CD4-positive, alpha-beta T cell (primary cell): ENCODE measurements at regions of chr20 and their contacts with region 1.

Region 1: DNA sequence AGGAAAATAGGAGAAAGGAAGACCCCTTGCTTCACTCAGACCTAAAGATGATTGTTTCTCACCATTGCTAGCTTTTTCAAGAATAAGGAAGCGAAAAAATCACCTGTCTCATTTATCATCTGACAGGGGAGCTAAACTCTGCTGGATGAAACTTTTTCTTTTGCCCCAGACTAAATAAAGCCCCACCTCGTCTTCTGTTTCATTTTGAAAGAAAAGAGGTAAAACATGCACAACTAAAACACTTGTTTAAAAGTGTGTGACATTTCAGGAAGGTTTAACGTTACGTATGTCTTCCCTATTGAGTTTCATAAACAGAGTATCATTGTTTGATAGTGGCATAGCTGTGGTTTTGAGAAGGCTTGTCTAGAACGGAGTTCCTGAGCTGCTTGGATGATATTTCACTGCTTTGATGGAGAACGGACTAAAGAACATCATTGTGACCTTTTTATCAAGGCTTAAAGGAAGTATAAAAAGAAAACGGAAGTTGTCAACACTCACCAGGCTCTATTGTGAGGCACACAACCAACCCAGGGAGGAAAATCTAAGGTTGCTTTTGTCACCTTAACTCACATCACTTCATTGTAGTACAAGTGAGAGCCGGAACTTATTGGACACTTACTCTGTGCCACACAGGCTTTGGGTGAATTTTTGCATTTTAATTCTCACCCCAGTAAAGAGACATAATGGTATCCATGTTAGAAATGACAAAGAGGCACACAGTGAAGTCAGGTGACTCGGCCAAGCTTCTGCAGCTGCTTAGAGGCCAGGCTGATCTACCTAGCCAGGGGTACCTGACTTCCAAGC is 29.5 kb downstream of the TSHZ2 start:
- DNase-seq: peak in 8 of 14 experiments; percentile 2 to 66 (median 22)
- ATAC-seq: peak; percentile 76
- H3K4me3 ChIP-seq: peak overlapping the region; percentile 44
- H3K4me3 Mint-ChIP-seq: peak overlapping the region; percentile 84
- H3K27ac ChIP-seq: peak overlapping the region; percentile 68 to 79
- H3K27ac Mint-ChIP-seq: peak overlapping the region; percentile 89
- H3K4me1 ChIP-seq: peaks cover 25% of the 10 kb centered on the region
- H3K4me1 Mint-ChIP-seq: peaks cover 72% of the 10 kb centered on the region
- H3K27me3 ChIP-seq: no peaks in the 10 kb centered on the region
- H3K27me3 Mint-ChIP-seq: no peaks in the 10 kb centered on the region
- CTCF ChIP-seq: no peak

Region 2: GRCh38 chr20:52972190-52972937 is 29.3 kb before region 1 on chr20 and contains the start of gene TSHZ2:
- CTCF ChIA-PET with region 1: no interaction called
- POLR2A ChIA-PET with region 1: interaction called, 120 read pairs
- intact Hi-C with region 1: loop called in 1 of 2 experiments (anchors 1 kb)
- DNase-seq: peak; percentile 39 to 76 (median 56)
- ATAC-seq: peak; percentile 50
- H3K4me3 ChIP-seq: peak within 1 kb of the TSS; percentile 77
- H3K4me3 Mint-ChIP-seq: peak within 1 kb of the TSS; percentile 95
- H3K27ac ChIP-seq: peak within 1 kb of the TSS; percentile 81 to 85
- H3K27ac Mint-ChIP-seq: peak within 1 kb of the TSS; percentile 89
- H3K4me1 ChIP-seq: peaks cover 5% of the 10 kb centered on the region
- H3K4me1 Mint-ChIP-seq: peaks cover 48% of the 10 kb centered on the region
- H3K27me3 ChIP-seq: peaks cover 0 to 8% of the 10 kb centered on the region in 2 experiments
- H3K27me3 Mint-ChIP-seq: peaks cover 6% of the 10 kb centered on the region
- CTCF ChIP-seq: no peak
- total RNA-seq, gene TSHZ2: 26.1 to 27.4 TPM

Region 3: GRCh38 chr20:52983726-52984450 is 17.8 kb before region 1 on chr20:
- CTCF ChIA-PET with region 1: interaction called, 3 read pairs
- POLR2A ChIA-PET with region 1: interaction called, 120 read pairs
- intact Hi-C with region 1: loop called in 1 of 2 experiments (anchors 2 kb)
- DNase-seq: peak in 4 of 14 experiments; percentile 6 to 33 (median 18)
- ATAC-seq: peak; percentile 59
- H3K4me3 ChIP-seq: peak overlapping the region; percentile 11
- H3K4me3 Mint-ChIP-seq: peak overlapping the region; percentile 56
- H3K27ac ChIP-seq: no peak overlapping the region
- H3K27ac Mint-ChIP-seq: peak overlapping the region; percentile 77
- H3K4me1 ChIP-seq: peaks cover 7% of the 10 kb centered on the region
- H3K4me1 Mint-ChIP-seq: peaks cover 66% of the 10 kb centered on the region
- H3K27me3 ChIP-seq: no peaks in the 10 kb centered on the region
- H3K27me3 Mint-ChIP-seq: no peaks in the 10 kb centered on the region
- CTCF ChIP-seq: no peak